Mammary epithelial cell (primary cell): ENCODE measurements at regions of chr7 and their contacts with region 1.

Region 1: GRCh38 chr7:38438970-38439369 is 165.5 kb upstream of the TARP start:
- DNase-seq: no peak
- H3K4me3 ChIP-seq: no peak overlapping the region
- H3K27ac ChIP-seq: no peak overlapping the region
- H3K4me1 ChIP-seq: no peaks in the 10 kb centered on the region
- H3K27me3 ChIP-seq: no peaks in the 10 kb centered on the region
- CTCF ChIP-seq: no peak

Region 2: DNA sequence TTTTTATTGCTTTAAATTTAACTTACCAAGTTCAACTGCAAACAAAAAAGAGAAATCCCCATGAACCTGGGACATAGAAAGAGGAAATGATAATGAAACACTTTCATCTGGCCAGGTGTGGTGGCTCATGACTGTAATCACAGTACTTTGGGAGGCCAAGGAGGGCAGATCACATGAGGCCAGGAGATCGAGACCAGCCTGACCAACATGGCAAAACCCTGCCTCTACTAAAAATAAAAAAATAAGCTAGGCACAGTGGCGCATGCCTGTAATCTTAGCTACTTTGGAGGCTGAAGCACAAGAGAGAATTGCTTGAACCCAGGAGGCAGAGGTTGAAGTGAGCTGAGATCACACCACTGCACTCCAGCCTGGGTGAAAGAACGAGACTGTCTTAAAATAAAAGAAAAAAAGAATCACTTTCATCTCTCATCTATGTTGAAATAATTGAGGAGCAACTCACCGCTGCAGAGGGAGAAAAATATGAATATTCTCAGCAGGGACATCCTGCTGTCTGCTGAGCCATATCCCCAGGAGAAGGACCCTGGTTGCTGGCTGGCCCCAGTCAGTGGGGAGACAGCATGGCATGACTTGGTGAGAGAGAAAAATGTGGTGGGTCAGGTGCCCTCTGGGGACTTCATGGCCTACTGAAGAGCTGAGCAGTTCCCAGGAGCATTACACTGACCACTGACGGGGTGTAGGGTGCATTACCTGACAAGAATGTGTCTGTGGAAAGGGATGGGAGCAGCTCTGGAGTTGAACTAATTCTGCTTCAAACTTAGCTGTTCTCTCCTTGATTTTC is 142.7 kb before region 1 on chr7:
- CTCF ChIA-PET with region 1: no interaction called
- dilution Hi-C with region 1: no loop called
- in situ Hi-C with region 1: no loop called
- intact Hi-C with region 1: no loop called
- DNase-seq: no peak
- H3K4me3 ChIP-seq: no peak overlapping the region
- H3K27ac ChIP-seq: no peak overlapping the region
- H3K4me1 ChIP-seq: no peaks in the 10 kb centered on the region
- H3K27me3 ChIP-seq: no peaks in the 10 kb centered on the region
- CTCF ChIP-seq: no peak

Region 3: GRCh38 chr7:38525857-38526256 is 86.9 kb after region 1 on chr7:
- CTCF ChIA-PET with region 1: interaction called, 11 read pairs
- dilution Hi-C with region 1: no loop called
- in situ Hi-C with region 1: no loop called
- intact Hi-C with region 1: no loop called
- DNase-seq: no peak
- H3K4me3 ChIP-seq: no peak overlapping the region
- H3K27ac ChIP-seq: no peak overlapping the region
- H3K4me1 ChIP-seq: no peaks in the 10 kb centered on the region
- H3K27me3 ChIP-seq: no peaks in the 10 kb centered on the region
- CTCF ChIP-seq: no peak